HEK293 (cell line): ENCODE measurements at regions of chr7 and their contacts with region 1.

Region 1: DNA sequence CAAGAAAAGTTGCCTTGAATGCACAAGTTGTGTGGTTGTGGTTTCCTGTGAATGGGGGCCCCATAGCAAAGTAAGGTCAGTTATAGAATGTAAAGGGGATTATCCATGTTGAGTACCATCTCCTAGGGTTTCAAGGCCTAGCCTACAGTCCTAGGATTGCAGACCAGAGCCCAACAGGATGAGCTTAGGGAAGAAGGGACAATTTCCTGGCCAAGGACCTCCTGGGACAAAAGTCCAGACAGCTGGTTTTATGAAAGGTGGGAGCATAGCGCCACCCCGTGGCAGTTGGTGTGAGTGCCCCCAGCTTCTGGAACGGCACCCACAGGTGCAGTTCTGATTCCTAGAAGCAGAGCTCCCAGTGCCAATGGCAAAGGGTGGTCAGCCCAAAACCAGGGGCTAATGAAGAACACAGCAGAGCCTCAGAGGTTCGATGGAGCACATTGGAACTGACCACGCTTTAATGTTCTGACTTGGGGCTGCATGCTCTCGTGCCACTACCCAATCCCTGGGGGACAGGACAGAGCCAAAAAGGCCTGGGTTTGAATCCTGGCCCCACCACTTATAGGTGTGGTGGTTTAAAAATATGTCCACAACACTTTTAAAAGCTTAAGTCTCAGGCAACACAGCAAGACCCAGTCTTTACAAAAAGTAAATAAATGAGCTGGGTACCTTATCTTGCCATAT is 25.8 kb upstream of the TMEM120A start:
- H3K4me3 ChIP-seq: no peak overlapping the region
- H3K27ac ChIP-seq: no peak overlapping the region
- H3K4me1 ChIP-seq: no peaks in the 10 kb centered on the region
- CTCF ChIP-seq: peak; percentile 69; the same call in 1 of the 2 replicates

Region 2: GRCh38 chr7:75866489-75867389 is 153.4 kb before region 1 on chr7:
- CTCF ChIA-PET with region 1: interaction called, 86 read pairs
- POLR2A ChIA-PET with region 1: interaction called, 6 read pairs
- H3K4me3 ChIP-seq: no peak overlapping the region
- H3K27ac ChIP-seq: no peak overlapping the region
- H3K4me1 ChIP-seq: no peaks in the 10 kb centered on the region
- CTCF ChIP-seq: peak; percentile 62; the same call in 1 of the 2 replicates

Region 3: GRCh38 chr7:75889826-75890225 is 130.3 kb before region 1 on chr7:
- CTCF ChIA-PET with region 1: interaction called, 11 read pairs
- POLR2A ChIA-PET with region 1: no interaction called
- H3K4me3 ChIP-seq: no peak overlapping the region
- H3K27ac ChIP-seq: no peak overlapping the region
- H3K4me1 ChIP-seq: no peaks in the 10 kb centered on the region
- CTCF ChIP-seq: no peak

Region 4: DNA sequence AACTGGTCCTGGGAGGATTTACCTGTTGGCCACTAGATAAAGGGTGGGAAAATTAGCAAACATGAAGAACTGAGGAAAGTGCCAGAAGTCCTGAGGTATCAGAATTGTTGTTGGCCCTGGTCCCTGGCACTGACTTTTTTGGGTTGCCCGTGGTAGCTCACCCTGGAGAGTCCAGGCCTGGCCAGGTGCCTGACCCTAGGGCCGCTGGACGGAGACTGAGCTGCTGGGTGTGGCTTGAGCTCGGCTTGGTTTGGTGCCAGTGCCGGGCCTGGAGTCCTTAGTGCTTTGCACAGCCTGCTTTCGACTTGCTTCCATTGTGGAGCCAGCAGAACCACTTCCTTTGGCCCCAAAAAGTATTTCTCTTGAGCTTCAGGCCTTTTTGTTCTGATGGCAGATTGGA is 40.7 kb after region 1 on chr7:
- CTCF ChIA-PET with region 1: no interaction called
- POLR2A ChIA-PET with region 1: no interaction called
- H3K4me3 ChIP-seq: no peak overlapping the region
- H3K27ac ChIP-seq: no peak overlapping the region
- H3K4me1 ChIP-seq: no peaks in the 10 kb centered on the region
- CTCF ChIP-seq: no peak